ENCODE measurements at regions of chr2 and their contacts with region 1.

Region 1: GRCh38 chr2:225282858-225283710 is 116.4 kb upstream of the NYAP2 start:
- DNase-seq: peak; percentile 1
- H3K4me3 ChIP-seq: no peak overlapping the region
- H3K27ac ChIP-seq: no peak overlapping the region
- H3K4me1 ChIP-seq: no peaks in the 10 kb centered on the region
- H3K27me3 ChIP-seq: no peaks in the 10 kb centered on the region
- CTCF ChIP-seq: peak; percentile 37 to 40
- POLR2A ChIP-seq: no peak

Region 2: GRCh38 chr2:225177098-225177497 is 106.0 kb before region 1 on chr2:
- CTCF ChIA-PET with region 1: no interaction called
- POLR2A ChIA-PET with region 1: no interaction called
- dilution Hi-C with region 1: no loop called
- intact Hi-C with region 1: no loop called
- DNase-seq: no peak
- H3K4me3 ChIP-seq: no peak overlapping the region
- H3K27ac ChIP-seq: no peak overlapping the region
- H3K4me1 ChIP-seq: no peaks in the 10 kb centered on the region
- H3K27me3 ChIP-seq: no peaks in the 10 kb centered on the region
- CTCF ChIP-seq: no peak
- POLR2A ChIP-seq: no peak

Region 3: GRCh38 chr2:225293638-225294037 is 10.6 kb after region 1 on chr2:
- CTCF ChIA-PET with region 1: no interaction called
- POLR2A ChIA-PET with region 1: no interaction called
- dilution Hi-C with region 1: no loop called
- intact Hi-C with region 1: no loop called
- DNase-seq: no peak
- H3K4me3 ChIP-seq: no peak overlapping the region
- H3K27ac ChIP-seq: no peak overlapping the region
- H3K4me1 ChIP-seq: no peaks in the 10 kb centered on the region
- H3K27me3 ChIP-seq: no peaks in the 10 kb centered on the region
- CTCF ChIP-seq: no peak
- POLR2A ChIP-seq: no peak

Region 4: DNA sequence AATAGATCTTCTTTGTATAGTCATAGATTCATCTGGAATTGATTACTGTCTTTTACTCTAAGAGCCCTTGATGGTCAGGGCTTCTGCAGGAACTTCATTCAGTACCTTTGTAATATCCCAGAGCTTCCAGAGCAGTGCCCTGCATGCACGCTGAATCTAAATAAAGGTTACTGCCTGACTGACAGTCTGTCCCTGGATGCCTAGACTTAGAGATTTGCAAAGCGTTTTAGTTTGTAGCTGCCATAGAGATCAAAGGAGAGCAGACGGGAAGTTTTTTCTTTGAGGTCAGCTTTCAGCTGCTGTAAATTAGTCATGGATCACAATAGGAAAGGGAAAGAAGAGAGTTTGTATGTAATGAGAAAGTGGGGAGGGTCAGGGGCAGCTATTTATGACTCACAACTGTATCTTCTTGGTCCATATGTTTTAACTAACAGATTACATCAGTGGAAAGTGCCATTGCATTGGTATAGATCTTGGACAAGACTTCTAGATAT is 71.2 kb after region 1 on chr2:
- CTCF ChIA-PET with region 1: no interaction called
- POLR2A ChIA-PET with region 1: no interaction called
- dilution Hi-C with region 1: no loop called
- intact Hi-C with region 1: loop called (anchors 1 kb)
- DNase-seq: peak; percentile 28
- H3K4me3 ChIP-seq: no peak overlapping the region
- H3K27ac ChIP-seq: no peak overlapping the region
- H3K4me1 ChIP-seq: no peaks in the 10 kb centered on the region
- H3K27me3 ChIP-seq: no peaks in the 10 kb centered on the region
- CTCF ChIP-seq: no peak
- POLR2A ChIP-seq: no peak

Region 5: GRCh38 chr2:225422145-225422544 is 139.1 kb after region 1 on chr2:
- CTCF ChIA-PET with region 1: no interaction called
- POLR2A ChIA-PET with region 1: no interaction called
- dilution Hi-C with region 1: no loop called
- intact Hi-C with region 1: no loop called
- DNase-seq: no peak
- H3K4me3 ChIP-seq: no peak overlapping the region
- H3K27ac ChIP-seq: no peak overlapping the region
- H3K4me1 ChIP-seq: no peaks in the 10 kb centered on the region
- H3K27me3 ChIP-seq: no peaks in the 10 kb centered on the region
- CTCF ChIP-seq: no peak
- POLR2A ChIP-seq: no peak

Measured in endothelial cell of umbilical vein (primary cell).